ENCODE measurements at regions of chr1 and their contacts with region 1.

Region 1: DNA sequence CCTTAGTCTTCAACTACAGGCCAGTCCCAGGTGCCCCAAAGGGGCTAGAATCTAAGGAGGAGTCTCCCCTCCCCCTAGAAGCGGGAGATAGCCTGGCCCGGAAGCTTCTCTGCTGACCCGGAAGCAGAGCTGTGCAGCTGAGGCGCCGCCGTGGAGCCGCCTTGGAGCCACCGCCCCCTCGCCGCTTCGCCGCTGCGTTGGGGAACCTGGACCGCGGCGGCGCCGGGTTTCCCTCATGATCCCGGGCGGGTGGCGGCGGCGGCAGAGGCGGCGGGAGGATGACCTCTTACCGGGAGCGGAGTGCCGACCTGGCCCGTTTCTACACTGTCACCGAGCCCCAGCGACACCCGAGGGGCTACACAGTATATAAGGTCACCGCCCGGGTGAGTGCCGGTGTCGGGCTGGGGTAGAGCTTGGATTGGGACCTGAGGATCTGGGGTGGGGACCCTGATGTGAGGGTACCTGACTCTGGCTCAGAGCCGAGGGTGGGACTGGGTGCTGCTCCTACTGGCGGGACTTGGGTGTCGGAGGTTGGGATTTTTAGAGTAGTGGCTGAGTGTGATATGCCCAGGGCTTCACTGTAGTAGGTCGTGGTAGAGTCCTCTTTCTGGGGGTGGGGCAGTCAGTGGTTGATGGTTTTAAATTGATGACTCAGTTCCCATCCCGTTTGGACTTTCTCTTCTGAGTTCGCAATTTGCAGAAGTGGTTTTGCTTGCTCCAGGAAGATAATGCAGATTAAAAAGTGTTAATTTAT is at the start of gene RPS6KC1:
- DNase-seq: peak; percentile 87 to 88
- H3K4me3 ChIP-seq: peak within 1 kb of the TSS; percentile 77
- H3K4me3 Mint-ChIP-seq: peak within 1 kb of the TSS; percentile 96
- H3K27ac Mint-ChIP-seq: peak within 1 kb of the TSS; percentile 93
- H3K4me1 ChIP-seq: peaks cover 18% of the 10 kb centered on the region
- H3K4me1 Mint-ChIP-seq: peaks cover 24% of the 10 kb centered on the region
- H3K27me3 ChIP-seq: no peaks in the 10 kb centered on the region
- H3K27me3 Mint-ChIP-seq: no peaks in the 10 kb centered on the region
- CTCF ChIP-seq: peak in 1 of 2 experiments; percentile 13
- total RNA-seq, gene RPS6KC1: 16.4 and 18.8 TPM in 2 replicates

Region 2: DNA sequence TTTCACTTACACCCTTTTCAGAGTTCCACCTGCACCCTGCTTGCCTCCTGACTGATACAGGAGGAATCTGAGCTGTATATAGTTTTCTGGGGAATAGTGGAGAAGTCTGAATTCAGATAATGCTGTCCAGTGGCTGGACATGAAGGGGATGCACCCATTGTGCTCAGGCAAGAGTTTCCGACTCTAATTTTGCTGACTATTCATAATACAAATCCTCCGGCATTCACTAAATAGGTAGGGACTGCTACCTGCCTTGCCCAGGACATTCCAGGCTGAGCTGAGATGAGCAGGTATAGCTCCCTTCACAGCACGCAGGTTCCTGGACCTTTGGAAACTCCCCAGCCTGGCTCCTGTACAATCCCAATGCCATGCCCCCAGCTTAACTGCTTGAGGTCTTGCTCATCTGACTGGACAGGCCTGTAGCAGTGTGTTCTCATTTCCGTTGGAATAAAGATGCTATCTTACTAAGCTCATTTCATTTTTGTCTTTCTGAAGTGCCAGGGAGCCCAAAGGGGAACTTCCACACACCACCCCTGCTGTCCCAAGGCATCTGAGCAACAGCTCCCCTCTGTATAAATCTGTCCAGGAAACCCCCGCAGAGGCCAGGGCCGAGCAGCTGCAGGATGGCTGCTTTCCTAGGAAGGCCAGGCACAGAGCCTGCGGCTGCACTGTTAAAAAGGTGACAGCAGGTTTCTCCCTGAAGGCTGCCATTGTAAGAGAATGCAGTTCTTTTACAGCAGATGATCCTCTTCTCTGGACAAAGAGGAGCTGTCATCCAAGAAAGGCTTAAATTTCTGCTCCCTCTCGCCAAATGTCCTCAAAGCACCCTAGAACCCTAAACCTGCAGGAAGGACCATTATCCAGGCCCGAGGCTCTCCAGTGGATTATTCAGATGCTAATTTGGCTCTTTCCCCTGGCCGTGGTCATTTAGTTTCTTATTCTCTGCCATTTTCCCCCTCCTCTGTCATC is 122.7 kb before region 1 on chr1:
- CTCF ChIA-PET with region 1: no interaction called
- POLR2A ChIA-PET with region 1: no interaction called
- intact Hi-C with region 1: no loop called
- DNase-seq: no peak
- H3K4me3 ChIP-seq: no peak overlapping the region
- H3K4me3 Mint-ChIP-seq: no peak overlapping the region
- H3K27ac Mint-ChIP-seq: no peak overlapping the region
- H3K4me1 ChIP-seq: peaks cover 13% of the 10 kb centered on the region
- H3K4me1 Mint-ChIP-seq: peaks cover 18% of the 10 kb centered on the region
- H3K27me3 ChIP-seq: no peaks in the 10 kb centered on the region
- H3K27me3 Mint-ChIP-seq: no peaks in the 10 kb centered on the region
- CTCF ChIP-seq: no peak

Region 3: GRCh38 chr1:213003256-213003655 is 48.0 kb before region 1 on chr1:
- CTCF ChIA-PET with region 1: no interaction called
- POLR2A ChIA-PET with region 1: no interaction called
- intact Hi-C with region 1: no loop called
- DNase-seq: no peak
- H3K4me3 ChIP-seq: no peak overlapping the region
- H3K4me3 Mint-ChIP-seq: no peak overlapping the region
- H3K27ac Mint-ChIP-seq: no peak overlapping the region
- H3K4me1 ChIP-seq: no peaks in the 10 kb centered on the region
- H3K4me1 Mint-ChIP-seq: no peaks in the 10 kb centered on the region
- H3K27me3 ChIP-seq: no peaks in the 10 kb centered on the region
- H3K27me3 Mint-ChIP-seq: no peaks in the 10 kb centered on the region
- CTCF ChIP-seq: no peak

Region 4: DNA sequence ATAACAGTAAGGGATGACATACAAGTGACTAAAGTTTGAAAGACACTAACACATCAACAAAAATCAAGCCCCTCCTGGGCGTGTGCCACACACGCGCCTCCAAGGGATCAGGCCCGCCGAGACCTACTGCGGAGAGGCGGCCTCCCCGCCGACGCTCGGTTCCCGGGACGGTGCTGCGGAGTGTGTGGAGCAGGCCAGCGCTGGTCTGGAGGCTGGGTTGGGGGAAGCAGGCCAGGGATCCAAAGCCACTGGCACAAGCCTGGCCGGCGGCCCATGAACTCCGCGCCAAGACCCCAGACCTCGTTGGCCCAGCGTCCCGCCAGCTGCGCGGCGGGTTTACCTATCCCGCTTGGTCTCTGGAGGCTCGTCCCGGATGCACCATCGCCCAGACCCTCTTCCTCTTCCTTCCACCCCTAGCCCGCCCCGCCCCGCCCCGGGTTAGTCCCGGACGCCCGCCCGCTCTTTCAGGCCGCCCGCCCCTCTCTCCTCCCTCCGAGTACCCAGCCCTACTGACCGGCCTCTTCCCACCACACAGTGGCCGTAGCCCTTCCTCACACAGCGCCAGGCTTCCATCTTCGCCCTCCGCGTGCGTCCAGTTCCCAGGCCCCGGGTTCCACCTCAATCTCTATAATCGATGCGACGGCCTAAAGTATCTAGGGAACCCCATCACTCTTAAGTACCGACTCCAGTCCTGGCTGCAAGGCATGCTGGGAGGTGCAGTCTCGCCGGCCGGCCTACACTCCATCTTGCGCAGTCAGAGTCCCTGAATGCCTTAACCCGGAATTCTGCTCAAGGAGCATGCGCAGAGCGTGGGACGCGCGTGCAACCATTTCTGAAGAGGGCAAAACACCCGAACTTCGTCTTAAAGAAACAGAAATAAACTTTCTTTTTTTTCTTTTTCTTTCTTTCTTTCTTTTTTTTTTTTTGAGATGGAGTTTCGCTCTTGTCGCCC is 35.9 kb before region 1 on chr1 and contains the start of gene ANGEL2:
- CTCF ChIA-PET with region 1: no interaction called
- POLR2A ChIA-PET with region 1: no interaction called
- intact Hi-C with region 1: loop called (anchors 1 kb)
- DNase-seq: peak; percentile 95 to 97
- H3K4me3 ChIP-seq: peak within 1 kb of the TSS; percentile 87
- H3K4me3 Mint-ChIP-seq: peak within 1 kb of the TSS; percentile 95
- H3K27ac Mint-ChIP-seq: peak within 1 kb of the TSS; percentile 87
- H3K4me1 ChIP-seq: peaks cover 3% of the 10 kb centered on the region; the same call in 1 of the 2 replicates
- H3K4me1 Mint-ChIP-seq: no peaks in the 10 kb centered on the region
- H3K27me3 ChIP-seq: no peaks in the 10 kb centered on the region
- H3K27me3 Mint-ChIP-seq: no peaks in the 10 kb centered on the region
- CTCF ChIP-seq: no peak
- total RNA-seq, gene ANGEL2: 33.8 and 34.8 TPM in 2 replicates